Activated CD4-positive, alpha-beta T cell treated with anti-CD3 and anti-CD28 coated beads for 36 hours (primary cell): ENCODE measurements at regions of chr6 and their contacts with region 1.

Region 1: GRCh38 chr6:89371849-89372505 is 19.5 kb upstream of the UBE2J1 start:
- DNase-seq: peak; percentile 88
- ATAC-seq: peak; percentile 89
- H3K4me3 Mint-ChIP-seq: no peak overlapping the region
- H3K27ac Mint-ChIP-seq: peak overlapping the region; percentile 51
- H3K4me1 Mint-ChIP-seq: peaks cover 23% of the 10 kb centered on the region
- H3K27me3 Mint-ChIP-seq: no peaks in the 10 kb centered on the region

Region 2: GRCh38 chr6:89281779-89282246 is 90.2 kb before region 1 on chr6:
- CTCF ChIA-PET with region 1: interaction called, 5 read pairs
- POLR2A ChIA-PET with region 1: no interaction called
- intact Hi-C with region 1: loop called in 1 of 2 experiments (anchors 5 kb)
- DNase-seq: peak; percentile 71
- ATAC-seq: peak; percentile 96
- H3K4me3 Mint-ChIP-seq: no peak overlapping the region
- H3K27ac Mint-ChIP-seq: no peak overlapping the region
- H3K4me1 Mint-ChIP-seq: no peaks in the 10 kb centered on the region
- H3K27me3 Mint-ChIP-seq: no peaks in the 10 kb centered on the region

Region 3: GRCh38 chr6:89360415-89360999 is 11.5 kb before region 1 on chr6:
- CTCF ChIA-PET with region 1: interaction called, 74 read pairs
- POLR2A ChIA-PET with region 1: no interaction called
- intact Hi-C with region 1: no loop called
- DNase-seq: no peak
- ATAC-seq: peak; percentile 87
- H3K4me3 Mint-ChIP-seq: no peak overlapping the region
- H3K27ac Mint-ChIP-seq: peak overlapping the region; percentile 53
- H3K4me1 Mint-ChIP-seq: peaks cover 62% of the 10 kb centered on the region
- H3K27me3 Mint-ChIP-seq: no peaks in the 10 kb centered on the region

Region 4: DNA sequence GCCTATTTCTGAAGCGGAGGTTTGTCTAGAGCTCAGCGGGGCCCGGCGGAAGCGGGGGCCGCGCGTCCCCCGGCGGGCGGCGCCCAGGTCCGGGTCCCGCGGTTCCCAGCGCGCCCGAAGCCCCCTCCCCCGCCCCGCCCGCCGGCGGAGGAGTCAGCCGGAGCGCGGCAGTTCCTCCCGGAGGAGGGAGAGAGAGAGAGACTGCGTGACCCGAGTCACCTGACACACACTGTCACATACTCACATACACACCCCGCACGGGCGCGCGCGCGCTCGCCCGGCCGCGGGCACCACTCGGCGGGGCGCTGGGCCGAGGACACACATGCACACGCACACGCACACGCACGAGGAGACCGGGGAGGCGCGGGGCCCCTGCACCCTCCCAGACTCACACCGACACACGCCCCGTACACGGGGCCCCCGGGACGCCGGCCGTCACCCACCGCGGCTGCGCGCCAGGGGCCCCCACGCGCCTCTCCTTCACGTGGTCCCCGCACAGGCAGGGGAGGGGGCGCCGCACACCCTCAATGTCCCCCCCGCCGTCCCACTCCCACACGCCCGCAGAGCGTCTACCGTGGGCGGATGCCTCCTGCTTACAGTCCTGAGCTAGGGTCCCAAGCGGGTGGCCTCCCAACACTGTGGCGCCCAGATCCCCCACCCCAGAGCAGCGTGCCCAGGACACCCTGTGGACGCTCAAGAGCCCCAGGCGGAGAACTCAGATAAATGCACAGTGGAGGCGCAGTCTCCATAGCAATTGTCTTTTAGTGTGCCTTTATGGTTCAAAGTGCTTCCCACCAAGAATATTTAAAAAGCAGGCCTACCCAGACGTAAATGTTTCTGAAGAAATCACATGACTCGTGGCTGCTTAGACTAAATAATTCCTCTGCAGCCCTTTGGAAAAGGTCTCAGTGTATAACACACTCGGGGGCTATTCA is 40.4 kb after region 1 on chr6 and contains the start of gene RRAGD:
- CTCF ChIA-PET with region 1: interaction called, 16 read pairs
- POLR2A ChIA-PET with region 1: interaction called, 4 read pairs
- intact Hi-C with region 1: loop called (anchors 1 to 5 kb)
- DNase-seq: peak; percentile 83
- ATAC-seq: peak; percentile 80
- H3K4me3 Mint-ChIP-seq: peak within 1 kb of the TSS; percentile 83
- H3K27ac Mint-ChIP-seq: peak within 1 kb of the TSS; percentile 85
- H3K4me1 Mint-ChIP-seq: peaks cover 20% of the 10 kb centered on the region
- H3K27me3 Mint-ChIP-seq: peaks cover 3% of the 10 kb centered on the region
- total RNA-seq, gene RRAGD: 19.6 to 20.1 TPM

Region 5: DNA sequence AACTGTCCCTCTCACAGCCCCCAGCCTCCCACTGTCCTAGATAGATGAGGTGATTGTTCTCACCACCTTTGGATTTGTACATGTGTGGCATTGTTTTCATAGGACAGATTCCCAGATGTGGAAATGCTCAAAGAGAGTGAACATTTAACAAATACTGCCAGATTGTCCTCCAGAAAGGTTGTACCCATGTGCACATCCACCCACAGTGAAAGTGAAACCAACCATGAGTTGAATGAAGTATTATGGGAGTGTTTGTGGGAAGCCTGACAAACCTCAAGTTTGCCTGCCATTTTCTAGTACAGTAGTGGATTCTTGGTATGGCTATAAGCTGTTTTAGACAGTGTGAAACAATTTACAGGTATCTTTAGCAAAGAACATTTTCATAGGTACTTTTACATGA is 103.7 kb after region 1 on chr6:
- CTCF ChIA-PET with region 1: no interaction called
- POLR2A ChIA-PET with region 1: no interaction called
- intact Hi-C with region 1: loop called in 1 of 2 experiments (anchors 5 kb)
- DNase-seq: peak; percentile 41
- ATAC-seq: peak; percentile 84
- H3K4me3 Mint-ChIP-seq: no peak overlapping the region
- H3K27ac Mint-ChIP-seq: no peak overlapping the region
- H3K4me1 Mint-ChIP-seq: peaks cover 18% of the 10 kb centered on the region
- H3K27me3 Mint-ChIP-seq: no peaks in the 10 kb centered on the region

Region 6: DNA sequence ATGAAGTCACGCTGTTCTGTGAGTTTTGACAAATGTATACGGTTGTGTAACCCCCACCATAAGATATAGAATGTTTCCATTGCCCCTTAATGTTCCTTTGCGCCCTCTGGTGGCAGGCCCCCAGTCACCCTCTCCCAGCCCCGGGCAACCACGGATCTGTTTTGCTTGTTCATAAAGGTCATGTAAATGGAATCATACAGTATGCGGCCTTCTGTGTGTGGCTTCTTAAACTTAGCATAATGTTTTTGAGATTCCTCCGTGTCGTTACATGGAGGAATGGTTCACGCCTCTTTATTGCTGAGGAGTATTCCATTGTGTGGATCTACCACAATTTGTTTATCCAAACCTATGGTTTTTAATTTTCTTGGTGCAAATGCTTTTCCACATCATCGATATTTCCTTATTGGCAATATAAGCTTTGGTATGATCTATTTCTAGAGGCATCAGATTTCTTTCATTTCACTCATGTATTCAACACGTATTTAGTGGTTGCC is 238.2 kb after region 1 on chr6:
- CTCF ChIA-PET with region 1: interaction called, 27 read pairs
- POLR2A ChIA-PET with region 1: no interaction called
- intact Hi-C with region 1: loop called (anchors 1 to 2 kb)
- DNase-seq: peak; percentile 88
- ATAC-seq: peak; percentile 92
- H3K4me3 Mint-ChIP-seq: no peak overlapping the region
- H3K27ac Mint-ChIP-seq: no peak overlapping the region
- H3K4me1 Mint-ChIP-seq: no peaks in the 10 kb centered on the region
- H3K27me3 Mint-ChIP-seq: no peaks in the 10 kb centered on the region